GM10248 (cell line): ENCODE measurements at regions of chr16 and their contacts with region 1.

Region 1: GRCh38 chr16:23595951-23596720 is at the start of gene NDUFAB1:
- DNase-seq: peak; percentile 95
- CTCF ChIP-seq: peak; percentile 98

Region 2: GRCh38 chr16:23556881-23557778 is 39.0 kb before region 1 on chr16 and contains the starts of genes EARS2 and UBFD1:
- CTCF ChIA-PET with region 1: interaction called, 24 read pairs
- POLR2A ChIA-PET with region 1: no interaction called
- DNase-seq: peak; percentile 97
- CTCF ChIP-seq: peak; percentile 96

Region 3: GRCh38 chr16:23570992-23571632 is 25.0 kb before region 1 on chr16:
- CTCF ChIA-PET with region 1: interaction called, 14 read pairs
- POLR2A ChIA-PET with region 1: no interaction called
- DNase-seq: peak; percentile 42
- CTCF ChIP-seq: no peak

Region 4: DNA sequence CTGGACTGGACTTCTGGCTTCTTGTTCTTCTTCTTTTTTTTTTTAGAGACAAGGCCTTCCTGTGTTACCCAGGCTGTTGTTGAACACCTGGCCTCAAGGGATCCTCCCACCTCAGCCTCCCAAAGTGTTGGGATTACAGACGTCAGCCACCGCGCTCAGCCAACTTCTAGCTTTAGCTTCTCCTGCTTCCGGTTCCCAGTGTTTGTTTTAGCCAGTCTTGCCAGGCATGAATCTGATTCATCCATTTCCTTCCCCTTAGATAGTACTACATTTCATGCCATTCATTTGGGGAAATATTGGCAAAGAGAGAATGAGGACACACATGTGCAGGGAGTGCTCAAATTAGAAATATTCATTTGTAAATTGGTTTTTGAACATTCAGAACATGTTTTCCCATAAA is 12.1 kb after region 1 on chr16:
- CTCF ChIA-PET with region 1: interaction called, 23 read pairs
- POLR2A ChIA-PET with region 1: no interaction called
- DNase-seq: no peak
- CTCF ChIP-seq: no peak

Region 5: DNA sequence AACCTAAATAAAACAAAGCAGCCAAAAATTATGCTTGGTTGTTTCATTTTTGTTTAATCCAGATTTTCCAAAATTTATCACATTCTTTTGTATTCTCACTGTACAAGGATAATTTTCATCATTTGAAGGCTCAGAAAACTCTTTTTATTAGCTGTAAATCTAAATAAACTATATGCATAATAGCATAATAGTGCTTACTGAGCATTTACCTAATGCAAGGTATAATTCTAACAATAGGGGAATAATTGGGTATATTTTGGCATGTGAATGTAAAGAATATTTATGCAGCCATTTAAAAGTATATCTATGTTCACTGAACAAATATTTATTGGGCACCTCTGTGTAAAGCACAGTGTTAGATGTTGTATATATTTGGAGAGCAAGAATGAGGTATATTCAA is 28.0 kb after region 1 on chr16:
- CTCF ChIA-PET with region 1: interaction called, 11 read pairs
- POLR2A ChIA-PET with region 1: no interaction called
- DNase-seq: no peak
- CTCF ChIP-seq: no peak